Gastrocnemius medialis (tissue), 4 donors: ENCODE measurements at regions of chr3 and their contacts with region 1.

Region 1: DNA sequence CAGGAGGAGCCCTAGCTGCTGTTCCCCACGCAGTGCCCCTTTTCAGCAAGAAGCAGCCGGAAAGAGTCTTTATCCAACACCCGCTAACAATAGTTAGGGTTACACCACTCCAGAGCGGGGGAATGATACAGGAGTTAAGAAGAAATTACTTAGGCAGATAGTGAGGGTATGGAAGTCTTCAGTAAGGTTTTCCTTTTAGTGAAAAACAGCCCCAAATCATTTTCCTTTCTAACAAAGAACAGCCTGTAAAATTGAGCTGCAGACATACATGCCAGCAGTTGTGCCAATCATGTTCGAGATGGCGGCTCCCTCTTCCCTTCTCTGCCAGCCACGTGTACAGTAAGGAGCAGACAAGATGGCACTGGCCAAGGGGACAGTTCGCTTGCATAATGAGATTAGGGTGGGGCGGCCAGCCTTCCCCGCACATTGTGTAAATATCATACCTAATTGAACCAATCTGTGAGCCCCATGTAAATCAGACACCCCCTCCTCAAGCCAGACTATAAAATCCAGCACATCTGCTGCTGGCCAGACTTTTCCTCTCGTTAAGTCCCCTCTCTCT is 18.5 kb upstream of the SENP5 start:
- DNase-seq: no peak
- ATAC-seq: no peak
- H3K4me3 ChIP-seq: no peak overlapping the region
- H3K27ac ChIP-seq: no peak overlapping the region
- H3K4me1 ChIP-seq: no peaks in the 10 kb centered on the region
- H3K27me3 ChIP-seq: no peaks in the 10 kb centered on the region
- CTCF ChIP-seq: no peak
- POLR2A ChIP-seq: no peak

Region 2: DNA sequence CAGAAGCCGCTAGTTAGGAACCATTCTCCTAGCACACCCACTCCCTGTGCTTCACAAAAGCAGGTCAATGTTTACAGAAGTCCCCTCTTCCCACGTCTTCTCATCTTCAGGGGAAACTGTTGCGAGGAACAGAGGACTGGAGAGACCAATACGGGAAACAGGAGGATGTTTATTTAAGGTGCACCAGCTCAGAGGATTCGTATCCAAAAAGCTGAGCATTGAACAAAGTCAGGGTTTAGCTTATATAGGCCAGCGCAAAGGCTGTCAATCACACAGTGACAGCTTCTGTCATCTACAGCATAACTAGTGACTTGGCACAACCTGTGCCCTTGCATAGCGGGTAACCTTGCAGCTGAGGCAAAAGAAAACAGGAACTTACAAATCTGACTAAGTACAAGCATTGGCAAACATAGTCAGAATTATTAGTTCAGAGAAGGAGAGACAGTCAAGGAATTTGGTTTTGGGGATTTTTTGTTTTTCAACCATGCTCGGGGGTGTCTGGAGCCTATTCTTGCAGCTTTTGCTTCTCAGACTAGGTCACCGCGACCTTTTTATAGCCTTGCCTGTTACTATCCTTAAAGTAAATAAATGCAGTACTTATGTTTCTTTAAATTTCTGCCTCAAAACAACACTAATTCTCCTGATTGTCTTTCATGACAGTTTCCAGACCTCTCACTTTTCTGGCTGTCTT is 699.3 kb before region 1 on chr3:
- in situ Hi-C with region 1: no loop called
- intact Hi-C with region 1: no loop called
- DNase-seq: no peak
- ATAC-seq: peak; percentile 49 to 74
- H3K4me3 ChIP-seq: no peak overlapping the region
- H3K27ac ChIP-seq: peak overlapping the region in 2 of 4 donors; percentile 10 to 55
- H3K4me1 ChIP-seq: peaks cover 4 to 8% of the 10 kb centered on the region in 2 donors
- H3K27me3 ChIP-seq: no peaks in the 10 kb centered on the region
- CTCF ChIP-seq: no peak
- POLR2A ChIP-seq: no peak

Region 3: DNA sequence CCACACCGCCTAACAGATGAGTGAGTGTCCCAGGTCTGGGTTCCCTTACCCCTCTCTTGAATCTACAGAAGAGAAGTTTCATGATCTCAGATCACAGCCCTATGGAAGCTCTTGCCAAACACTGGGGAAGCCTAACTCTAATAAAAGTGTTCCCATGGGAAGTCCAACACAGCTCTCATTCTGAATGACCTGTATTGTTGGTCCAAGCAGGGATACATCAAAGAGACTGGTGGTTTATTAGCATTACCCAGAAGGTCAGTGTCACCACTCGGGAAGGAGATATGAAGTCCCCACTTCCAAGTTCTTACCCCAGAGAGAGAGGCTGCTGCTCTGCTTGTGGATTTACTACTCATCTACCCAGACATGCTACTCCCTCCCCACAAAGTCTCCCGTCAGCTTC is 102.1 kb after region 1 on chr3:
- in situ Hi-C with region 1: loop called in 2 of 4 experiments (anchors 10 to 25 kb)
- intact Hi-C with region 1: no loop called
- DNase-seq: no peak
- ATAC-seq: no peak
- H3K4me3 ChIP-seq: no peak overlapping the region
- H3K27ac ChIP-seq: no peak overlapping the region
- H3K4me1 ChIP-seq: no peaks in the 10 kb centered on the region
- H3K27me3 ChIP-seq: no peaks in the 10 kb centered on the region
- CTCF ChIP-seq: no peak
- POLR2A ChIP-seq: no peak